OCI-LY7 (cell line): ENCODE measurements at regions of chr19 and their contacts with region 1.

Region 1: DNA sequence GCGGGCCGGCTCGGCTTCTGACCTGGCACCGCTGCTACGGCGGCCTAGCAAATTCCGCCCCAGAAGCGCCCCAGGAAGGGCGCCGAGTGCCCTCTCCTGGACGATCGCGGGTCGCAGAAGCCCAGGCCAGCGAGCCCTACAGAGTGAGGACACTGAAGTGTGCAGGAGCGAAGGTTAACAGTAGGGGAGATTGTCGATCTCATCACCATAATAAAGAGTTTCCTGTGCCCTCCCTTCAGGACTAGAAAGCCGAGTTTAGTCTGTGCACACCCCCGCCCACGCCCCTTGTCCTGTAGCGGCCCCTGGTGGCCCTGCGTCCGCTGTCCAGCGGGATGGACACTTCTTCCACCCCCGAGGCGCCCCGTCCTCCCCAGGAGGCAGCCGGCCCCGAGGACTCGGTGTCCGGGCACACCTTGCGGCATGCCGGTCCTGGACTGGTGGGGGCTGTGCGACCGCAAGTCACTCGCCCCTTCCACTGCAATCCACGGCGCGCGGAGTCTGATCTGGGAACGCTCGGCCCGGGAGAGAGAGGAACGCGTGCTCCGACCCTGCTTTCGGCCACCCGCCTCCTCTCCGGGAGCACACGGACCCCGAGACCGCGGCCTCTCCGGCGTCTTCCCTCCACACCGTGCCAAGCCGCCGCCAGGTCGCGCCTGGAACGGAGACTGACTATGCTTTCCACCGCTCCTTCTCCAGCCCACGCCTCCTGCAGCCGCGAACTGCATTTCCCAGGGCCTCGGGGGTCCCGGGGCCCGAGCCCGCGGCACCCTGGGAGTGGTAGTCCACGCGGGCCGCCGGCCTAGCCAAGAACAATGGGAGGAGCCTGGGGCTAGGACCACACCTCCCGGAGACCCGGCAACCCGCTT is 769 bp upstream of the KMT2B start:
- DNase-seq: peak; percentile 99
- H3K4me3 ChIP-seq: peak overlapping the region; percentile 77
- H3K27ac ChIP-seq: peak overlapping the region; percentile 58
- H3K4me1 ChIP-seq: peaks cover 52% of the 10 kb centered on the region
- CTCF ChIP-seq: peak; percentile 83

Region 2: DNA sequence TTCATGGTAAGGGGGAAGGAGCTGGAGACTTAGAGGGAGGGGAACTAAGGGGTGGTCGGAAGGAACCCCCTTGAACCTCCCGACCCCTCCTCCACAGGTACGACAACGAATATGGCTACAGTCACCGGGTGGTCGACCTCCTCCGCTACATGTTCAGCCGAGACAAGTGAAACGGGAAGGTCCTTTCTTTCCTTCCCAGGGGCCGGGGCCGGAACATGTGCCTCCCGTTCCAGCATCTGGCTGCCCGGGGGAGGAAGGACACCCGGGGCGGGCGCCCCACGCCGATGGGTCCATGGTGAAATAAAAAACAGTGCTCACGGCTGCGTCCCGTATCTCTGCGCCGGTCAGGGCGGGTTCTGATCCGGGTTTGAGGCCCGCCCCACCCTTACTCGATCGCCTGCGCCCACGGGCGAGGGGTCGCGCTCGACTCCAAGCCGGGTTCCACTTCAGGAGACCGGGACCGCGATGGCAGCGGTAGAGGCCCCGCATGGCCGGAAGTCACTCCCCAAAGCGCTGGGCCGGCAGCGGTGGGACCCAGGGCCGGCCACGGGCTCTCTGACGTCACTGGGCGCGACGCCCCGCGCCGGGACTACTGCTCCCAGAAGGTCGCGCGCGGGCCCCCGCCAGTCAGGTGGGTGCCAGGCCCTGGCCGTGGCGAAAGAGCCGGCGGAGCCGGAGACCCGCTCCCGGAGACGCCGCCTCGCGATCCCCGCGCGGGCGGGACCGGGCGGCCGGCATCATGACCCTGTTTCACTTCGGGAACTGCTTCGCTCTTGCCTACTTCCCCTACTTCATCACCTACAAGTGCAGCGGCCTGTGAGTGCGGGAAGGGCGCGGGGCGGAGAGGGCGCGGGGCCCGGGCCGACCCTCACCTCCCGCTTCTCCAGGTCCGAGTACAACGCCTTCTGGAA is 171.8 kb before region 1 on chr19 and contains the start of gene TMEM147:
- CTCF ChIA-PET with region 1: no interaction called
- POLR2A ChIA-PET with region 1: no interaction called
- intact Hi-C with region 1: loop called (anchors 2 kb)
- DNase-seq: peak; percentile 92
- H3K4me3 ChIP-seq: peak within 1 kb of the TSS; percentile 80
- H3K27ac ChIP-seq: peak within 1 kb of the TSS; percentile 4
- H3K4me1 ChIP-seq: peaks cover 28% of the 10 kb centered on the region
- CTCF ChIP-seq: no peak
- total RNA-seq, gene TMEM147: 83.2 and 85.8 TPM in 2 replicates

Region 3: DNA sequence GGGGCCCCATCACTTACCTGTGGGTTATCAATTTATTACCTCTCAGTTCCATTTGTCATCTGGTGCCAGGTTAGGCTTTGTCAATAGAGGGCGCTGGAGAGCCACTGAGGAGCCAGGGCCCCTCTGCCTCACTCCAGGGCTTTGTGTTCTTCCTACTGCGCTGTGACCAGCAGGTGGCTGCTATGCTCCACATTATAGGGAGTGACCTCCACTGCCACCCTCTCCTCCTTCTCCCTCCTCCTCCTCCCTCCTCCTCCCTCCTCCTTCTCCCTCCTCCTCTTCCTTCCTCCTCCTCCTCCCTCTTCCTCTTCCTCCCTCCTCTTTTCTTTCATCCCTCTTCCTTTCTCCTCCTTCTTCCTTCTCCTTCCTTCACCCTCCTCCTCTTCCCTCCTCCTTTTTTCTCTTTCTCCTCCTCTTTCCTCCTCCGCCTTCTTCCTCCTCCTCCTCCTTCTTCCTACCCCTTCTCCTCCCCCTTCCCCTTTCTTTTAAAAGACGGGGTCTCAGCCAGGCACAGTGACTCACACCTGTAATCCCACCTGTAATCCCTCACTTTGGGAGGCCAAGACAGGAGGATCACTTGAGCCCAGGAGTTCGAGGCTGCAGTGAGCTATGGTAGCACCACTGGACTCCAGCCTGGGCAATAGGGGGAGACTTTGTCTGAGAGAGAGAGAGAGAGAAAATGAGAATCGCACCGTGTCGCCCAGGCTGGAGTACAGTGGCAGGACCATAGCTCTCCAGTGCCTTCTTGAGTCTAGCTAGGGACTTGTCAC is 23.0 kb before region 1 on chr19:
- CTCF ChIA-PET with region 1: interaction called, 7 read pairs
- POLR2A ChIA-PET with region 1: interaction called, 3 read pairs
- intact Hi-C with region 1: loop called (anchors 1 kb)
- DNase-seq: peak; percentile 92
- H3K4me3 ChIP-seq: no peak overlapping the region
- H3K27ac ChIP-seq: no peak overlapping the region
- H3K4me1 ChIP-seq: no peaks in the 10 kb centered on the region
- CTCF ChIP-seq: peak; percentile 99

Region 4: DNA sequence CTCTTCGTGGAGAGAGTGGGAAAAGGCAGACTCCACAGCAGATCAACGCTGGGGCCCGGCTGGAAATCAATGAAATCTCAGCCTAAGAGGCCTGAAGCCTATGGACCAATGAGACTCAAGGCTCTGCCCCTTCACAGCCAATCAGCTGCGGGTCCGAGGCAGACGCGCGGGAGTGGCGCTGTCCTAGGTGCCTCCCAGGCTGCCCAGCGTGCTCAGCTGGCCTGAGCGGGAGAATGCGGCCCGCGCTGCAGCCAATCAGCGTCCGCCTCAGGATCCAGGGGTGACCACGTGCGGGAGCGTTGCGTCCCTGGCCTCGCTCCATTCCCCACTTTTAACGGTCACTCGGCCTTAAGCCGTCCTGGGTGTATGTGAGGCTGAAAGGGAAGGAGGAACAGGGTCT is 12.8 kb before region 1 on chr19 and contains the start of gene ZBTB32:
- CTCF ChIA-PET with region 1: no interaction called
- POLR2A ChIA-PET with region 1: no interaction called
- intact Hi-C with region 1: no loop called
- DNase-seq: no peak
- H3K4me3 ChIP-seq: no peak within 1 kb of the TSS
- H3K27ac ChIP-seq: no peak within 1 kb of the TSS
- H3K4me1 ChIP-seq: peaks cover 15% of the 10 kb centered on the region
- CTCF ChIP-seq: no peak
- total RNA-seq, gene ZBTB32: not detected in 2 replicates

Region 5: DNA sequence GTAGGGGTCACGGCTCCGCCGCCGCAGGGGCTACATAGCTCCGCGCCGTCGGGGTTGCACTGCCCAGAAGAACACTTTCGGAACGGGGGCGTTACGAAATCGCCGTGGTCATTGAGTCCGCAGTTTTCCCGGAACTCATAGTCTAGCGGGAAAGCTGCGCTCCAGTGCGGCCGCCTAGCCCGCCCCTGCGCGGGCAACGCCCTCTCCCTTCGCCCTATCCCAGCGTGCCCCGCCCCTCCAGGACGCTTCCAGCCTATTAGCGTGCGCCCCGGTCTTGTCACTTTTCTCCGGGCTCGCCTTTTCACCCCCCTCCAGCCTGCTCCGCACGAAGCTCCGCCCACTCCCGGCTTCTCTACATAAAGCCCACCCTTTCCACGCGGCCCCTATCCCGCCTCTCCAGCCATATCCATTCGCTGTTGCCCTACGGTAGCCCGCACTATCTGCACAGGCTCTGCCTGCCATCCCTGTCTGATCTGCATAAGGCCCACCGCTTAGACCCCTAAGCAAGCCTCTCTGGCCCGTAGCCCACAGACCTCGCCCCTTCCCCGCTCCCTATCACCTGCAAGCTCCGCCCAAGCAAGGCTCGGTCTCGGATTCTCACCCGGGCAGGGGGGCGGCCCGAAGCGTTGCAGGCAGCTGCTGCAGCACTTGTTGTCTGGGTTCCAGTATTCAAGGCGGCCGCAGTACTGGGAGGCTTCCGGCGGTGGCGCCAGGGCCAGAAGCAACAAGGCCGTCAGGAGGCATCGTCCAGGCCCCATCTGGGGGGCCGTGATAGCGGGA is 23.6 kb after region 1 on chr19:
- CTCF ChIA-PET with region 1: no interaction called
- POLR2A ChIA-PET with region 1: interaction called, 3 read pairs
- intact Hi-C with region 1: loop called (anchors 1 kb)
- DNase-seq: peak; percentile 97
- H3K4me3 ChIP-seq: peak overlapping the region; percentile 69
- H3K27ac ChIP-seq: peak overlapping the region; percentile 86
- H3K4me1 ChIP-seq: peaks cover 52% of the 10 kb centered on the region
- CTCF ChIP-seq: peak; percentile 61

Region 6: DNA sequence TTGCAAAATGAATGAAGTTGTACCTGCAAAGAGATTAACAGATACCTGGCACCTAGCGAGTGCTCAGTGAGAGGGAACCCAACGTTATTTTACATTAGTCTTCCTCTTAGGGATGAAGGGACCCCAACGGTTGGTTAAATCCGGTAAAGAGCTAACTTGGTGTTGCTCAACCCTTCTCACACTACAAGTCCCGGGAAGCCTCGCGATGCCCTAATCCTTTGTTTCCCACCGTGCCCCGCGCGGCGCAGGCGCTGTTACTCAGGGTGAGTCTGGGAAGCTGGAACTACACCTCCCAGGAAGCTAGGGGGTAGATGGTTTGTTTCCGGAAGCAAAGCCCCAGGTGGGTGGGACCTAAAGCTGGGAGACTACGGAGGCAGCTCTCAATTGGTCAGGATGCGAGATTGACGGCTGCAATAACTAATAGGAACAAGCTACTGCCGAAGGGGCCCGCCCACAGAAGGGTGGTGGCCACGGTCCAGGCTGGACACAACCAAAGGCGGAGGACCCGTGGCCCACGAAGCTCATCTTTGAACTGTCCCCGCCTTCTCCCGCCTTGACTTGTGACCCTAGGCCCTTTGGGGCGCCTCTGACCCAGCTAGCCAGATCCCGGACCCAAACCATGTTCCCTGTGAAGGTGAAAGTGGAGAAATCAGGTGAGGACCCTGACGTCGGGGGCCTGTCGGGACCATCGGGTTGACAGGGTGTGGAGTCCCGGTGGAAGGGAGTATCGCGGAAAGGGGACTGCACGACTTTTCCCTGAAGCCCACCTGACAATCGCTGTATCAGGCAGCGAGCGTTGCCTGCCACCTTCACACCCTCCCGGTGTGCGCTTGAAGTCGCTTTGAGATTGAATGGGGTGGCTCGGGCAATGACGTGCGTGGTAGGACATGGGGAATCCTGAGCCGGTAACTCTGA is 31.3 kb after region 1 on chr19 and contains the start of gene LIN37:
- CTCF ChIA-PET with region 1: no interaction called
- POLR2A ChIA-PET with region 1: interaction called, 3 read pairs
- intact Hi-C with region 1: loop called (anchors 1 kb)
- DNase-seq: peak; percentile 99
- H3K4me3 ChIP-seq: peak within 1 kb of the TSS; percentile 78
- H3K27ac ChIP-seq: peak within 1 kb of the TSS; percentile 37
- H3K4me1 ChIP-seq: peaks cover 36% of the 10 kb centered on the region
- CTCF ChIP-seq: no peak
- total RNA-seq, gene LIN37: 6.0 and 11.6 TPM in 2 replicates

Region 7: GRCh38 chr19:35757749-35758608 is 40.9 kb after region 1 on chr19 and contains the start of gene PROSER3:
- CTCF ChIA-PET with region 1: no interaction called
- POLR2A ChIA-PET with region 1: no interaction called
- intact Hi-C with region 1: loop called (anchors 5 kb)
- DNase-seq: peak; percentile 99
- H3K4me3 ChIP-seq: peak within 1 kb of the TSS; percentile 96
- H3K27ac ChIP-seq: peak within 1 kb of the TSS; percentile 82
- H3K4me1 ChIP-seq: peaks cover 21% of the 10 kb centered on the region
- CTCF ChIP-seq: no peak
- total RNA-seq, gene PROSER3: 15.2 and 17.2 TPM in 2 replicates

Region 8: DNA sequence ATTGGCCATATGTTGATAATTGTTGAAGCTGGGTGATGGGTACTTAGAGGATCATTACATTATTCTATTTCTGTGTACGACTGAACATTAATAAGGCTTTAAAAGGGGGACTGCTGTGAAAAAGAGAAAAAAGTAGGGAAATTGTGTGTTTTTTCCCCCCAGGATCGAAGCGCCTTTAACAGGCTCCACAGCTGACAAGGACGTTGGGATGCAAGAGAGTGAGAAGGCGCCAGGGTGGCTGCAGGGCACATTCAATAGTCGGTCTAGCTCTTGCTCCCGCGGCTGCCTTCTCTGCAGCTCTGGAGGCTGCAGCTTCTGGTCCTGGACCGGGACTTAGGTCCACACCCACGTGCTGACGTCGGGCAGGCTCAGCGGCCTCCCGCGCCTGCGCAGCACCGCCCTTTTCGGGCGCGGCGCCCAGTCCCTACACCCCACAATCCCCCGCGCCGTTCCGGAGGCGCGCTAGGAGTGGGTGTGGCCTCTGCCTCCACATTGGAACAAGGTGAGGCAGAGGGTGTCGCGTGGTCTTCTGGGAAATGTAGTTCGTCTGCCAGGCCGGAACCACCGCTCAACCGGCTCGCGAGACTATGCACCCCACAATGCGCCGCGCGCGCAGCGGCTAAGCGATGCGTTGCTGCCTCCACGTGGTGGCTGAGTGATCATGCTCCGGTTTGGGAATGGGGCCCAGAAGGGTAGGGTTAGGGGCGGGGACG is 214.3 kb after region 1 on chr19:
- CTCF ChIA-PET with region 1: no interaction called
- POLR2A ChIA-PET with region 1: no interaction called
- intact Hi-C with region 1: loop called (anchors 1 kb)
- DNase-seq: peak; percentile 100
- H3K4me3 ChIP-seq: peak overlapping the region; percentile 67
- H3K27ac ChIP-seq: peak overlapping the region; percentile 61
- H3K4me1 ChIP-seq: peaks cover 12% of the 10 kb centered on the region
- CTCF ChIP-seq: peak; percentile 95